ENCODE measurements at regions of chr3 and their contacts with region 1.

Region 1: GRCh38 chr3:104631254-104631653 is 735.5 kb upstream of the ALCAM start:
- DNase-seq: no peak
- ATAC-seq: peak in 1 of 3 donors; percentile 21
- H3K4me3 ChIP-seq: no peak overlapping the region
- H3K4me3 Mint-ChIP-seq: no peak overlapping the region
- H3K27ac ChIP-seq: no peak overlapping the region
- H3K27ac Mint-ChIP-seq: no peak overlapping the region
- H3K4me1 ChIP-seq: no peaks in the 10 kb centered on the region
- H3K4me1 Mint-ChIP-seq: no peaks in the 10 kb centered on the region
- H3K27me3 ChIP-seq: no peaks in the 10 kb centered on the region
- H3K27me3 Mint-ChIP-seq: no peaks in the 10 kb centered on the region
- CTCF ChIP-seq: no peak

Region 2: DNA sequence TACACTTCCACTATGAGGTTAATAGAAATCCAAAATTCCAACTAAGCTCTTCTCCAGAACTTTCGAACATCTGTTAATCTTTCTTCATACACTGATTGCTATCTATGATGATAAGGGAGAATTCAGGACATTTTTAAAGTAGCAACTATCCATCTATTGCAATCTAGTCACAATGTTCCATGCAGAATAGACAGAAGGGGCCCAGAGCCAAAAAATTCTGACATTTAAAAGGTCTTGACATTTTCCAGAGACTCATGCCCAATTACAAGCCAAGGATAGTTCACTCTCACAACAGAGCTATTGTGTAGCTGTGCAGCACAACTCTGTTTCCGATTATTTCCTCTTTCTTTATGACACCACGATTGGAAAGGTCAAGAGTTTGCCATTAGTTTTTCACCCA is 264.3 kb before region 1 on chr3:
- intact Hi-C with region 1: no loop called
- DNase-seq: no peak
- ATAC-seq: no peak
- H3K4me3 ChIP-seq: no peak overlapping the region
- H3K4me3 Mint-ChIP-seq: no peak overlapping the region
- H3K27ac ChIP-seq: no peak overlapping the region
- H3K27ac Mint-ChIP-seq: no peak overlapping the region
- H3K4me1 ChIP-seq: no peaks in the 10 kb centered on the region
- H3K4me1 Mint-ChIP-seq: no peaks in the 10 kb centered on the region
- H3K27me3 ChIP-seq: no peaks in the 10 kb centered on the region
- H3K27me3 Mint-ChIP-seq: no peaks in the 10 kb centered on the region
- CTCF ChIP-seq: no peak

Region 3: DNA sequence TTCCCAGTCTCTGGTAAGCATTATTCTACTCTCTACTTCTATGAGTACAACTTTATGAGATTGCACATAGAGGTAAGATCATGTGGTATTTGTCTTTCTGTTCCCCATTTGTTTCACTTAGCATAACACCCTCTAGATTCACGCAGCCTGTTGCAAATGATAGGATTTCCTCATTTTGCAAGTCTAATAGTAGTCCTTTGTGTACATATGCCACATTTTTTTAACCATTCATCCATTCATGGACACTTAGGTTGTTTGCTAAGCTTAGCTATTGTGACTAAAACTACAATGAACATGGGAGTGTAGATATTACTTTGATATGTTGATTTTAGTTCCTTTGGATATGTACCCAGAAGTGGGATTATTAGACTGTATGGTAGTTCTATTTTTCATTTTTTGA is 17.6 kb after region 1 on chr3:
- intact Hi-C with region 1: loop called (anchors 2 kb)
- DNase-seq: no peak
- ATAC-seq: no peak
- H3K4me3 ChIP-seq: no peak overlapping the region
- H3K4me3 Mint-ChIP-seq: no peak overlapping the region
- H3K27ac ChIP-seq: no peak overlapping the region
- H3K27ac Mint-ChIP-seq: no peak overlapping the region
- H3K4me1 ChIP-seq: no peaks in the 10 kb centered on the region
- H3K4me1 Mint-ChIP-seq: no peaks in the 10 kb centered on the region
- H3K27me3 ChIP-seq: no peaks in the 10 kb centered on the region
- H3K27me3 Mint-ChIP-seq: no peaks in the 10 kb centered on the region
- CTCF ChIP-seq: no peak

Region 4: GRCh38 chr3:105062853-105063252 is 431.6 kb after region 1 on chr3:
- intact Hi-C with region 1: no loop called
- DNase-seq: no peak
- ATAC-seq: no peak
- H3K4me3 ChIP-seq: no peak overlapping the region
- H3K4me3 Mint-ChIP-seq: no peak overlapping the region
- H3K27ac ChIP-seq: no peak overlapping the region
- H3K27ac Mint-ChIP-seq: no peak overlapping the region
- H3K4me1 ChIP-seq: no peaks in the 10 kb centered on the region
- H3K4me1 Mint-ChIP-seq: no peaks in the 10 kb centered on the region
- H3K27me3 ChIP-seq: no peaks in the 10 kb centered on the region
- H3K27me3 Mint-ChIP-seq: no peaks in the 10 kb centered on the region
- CTCF ChIP-seq: no peak

Measured in natural killer cell (primary cell).